ENCODE measurements at regions of chr9 and their contacts with region 1.

Region 1: DNA sequence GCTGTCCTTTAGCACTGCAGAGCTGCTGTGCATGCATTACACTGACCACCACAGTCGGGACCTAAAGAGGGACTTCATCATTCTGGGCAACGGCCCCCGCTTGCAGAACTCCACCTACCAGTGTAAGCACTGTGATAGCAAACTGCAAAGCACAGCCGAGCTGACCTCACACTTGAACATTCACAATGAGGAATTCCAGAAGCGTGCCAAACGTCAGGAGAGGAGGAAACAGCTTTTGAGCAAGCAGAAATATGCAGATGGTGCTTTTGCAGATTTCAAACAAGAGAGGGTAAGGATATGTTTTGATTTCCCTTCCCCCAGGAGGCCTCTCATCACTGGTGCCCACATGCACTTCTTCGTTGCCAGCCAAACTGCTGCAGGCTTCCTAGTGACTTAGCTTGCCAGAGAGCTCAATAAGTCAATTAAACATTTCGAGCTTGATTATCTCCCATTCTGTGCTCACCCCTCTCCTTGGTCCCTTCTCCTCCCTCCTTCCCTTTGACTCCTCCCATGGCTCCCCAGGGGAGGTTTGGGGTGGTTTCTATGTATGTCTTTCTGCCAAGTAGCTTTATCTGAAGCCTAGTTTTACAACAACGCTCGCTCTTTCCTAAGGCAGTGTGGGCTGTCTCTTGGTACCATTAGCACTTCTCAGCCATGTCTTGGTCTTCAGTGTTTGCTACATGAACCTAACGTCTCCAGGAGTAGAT is 66.7 kb downstream of the ZNF462 start:
- DNase-seq: no peak
- H3K4me3 ChIP-seq: no peak overlapping the region
- H3K4me3 Mint-ChIP-seq: no peak overlapping the region
- H3K27ac Mint-ChIP-seq: peak overlapping the region; percentile 79
- H3K4me1 ChIP-seq: peaks cover 37% of the 10 kb centered on the region
- H3K4me1 Mint-ChIP-seq: peaks cover 43% of the 10 kb centered on the region
- H3K27me3 ChIP-seq: no peaks in the 10 kb centered on the region
- H3K27me3 Mint-ChIP-seq: no peaks in the 10 kb centered on the region
- CTCF ChIP-seq: no peak

Region 2: GRCh38 chr9:106648799-106649198 is 280.8 kb before region 1 on chr9:
- CTCF ChIA-PET with region 1: no interaction called
- POLR2A ChIA-PET with region 1: no interaction called
- intact Hi-C with region 1: loop called (anchors 5 kb)
- DNase-seq: peak in 1 of 2 experiments; percentile 14
- H3K4me3 ChIP-seq: no peak overlapping the region
- H3K4me3 Mint-ChIP-seq: no peak overlapping the region
- H3K27ac Mint-ChIP-seq: no peak overlapping the region
- H3K4me1 ChIP-seq: no peaks in the 10 kb centered on the region
- H3K4me1 Mint-ChIP-seq: no peaks in the 10 kb centered on the region
- H3K27me3 ChIP-seq: no peaks in the 10 kb centered on the region
- H3K27me3 Mint-ChIP-seq: no peaks in the 10 kb centered on the region
- CTCF ChIP-seq: peak; percentile 27 to 38

Region 3: GRCh38 chr9:106712268-106712667 is 217.4 kb before region 1 on chr9:
- CTCF ChIA-PET with region 1: no interaction called
- POLR2A ChIA-PET with region 1: no interaction called
- intact Hi-C with region 1: loop called (anchors 5 kb)
- DNase-seq: no peak
- H3K4me3 ChIP-seq: no peak overlapping the region
- H3K4me3 Mint-ChIP-seq: no peak overlapping the region
- H3K27ac Mint-ChIP-seq: no peak overlapping the region
- H3K4me1 ChIP-seq: peaks cover under 1% of the 10 kb centered on the region; the same call in 1 of the 2 replicates
- H3K4me1 Mint-ChIP-seq: no peaks in the 10 kb centered on the region
- H3K27me3 ChIP-seq: no peaks in the 10 kb centered on the region
- H3K27me3 Mint-ChIP-seq: no peaks in the 10 kb centered on the region
- CTCF ChIP-seq: no peak

Region 4: GRCh38 chr9:106892632-106893031 is 37.0 kb before region 1 on chr9:
- CTCF ChIA-PET with region 1: no interaction called
- POLR2A ChIA-PET with region 1: no interaction called
- intact Hi-C with region 1: no loop called
- DNase-seq: peak; percentile 84 to 90
- H3K4me3 ChIP-seq: no peak overlapping the region
- H3K4me3 Mint-ChIP-seq: peak overlapping the region; percentile 40
- H3K27ac Mint-ChIP-seq: peak overlapping the region; percentile 92
- H3K4me1 ChIP-seq: peaks cover 61% of the 10 kb centered on the region
- H3K4me1 Mint-ChIP-seq: peaks cover 43% of the 10 kb centered on the region
- H3K27me3 ChIP-seq: no peaks in the 10 kb centered on the region
- H3K27me3 Mint-ChIP-seq: no peaks in the 10 kb centered on the region
- CTCF ChIP-seq: no peak